Motor neuron (in vitro differentiated cells): ENCODE measurements at regions of chr2 and their contacts with region 1.

Region 1: DNA sequence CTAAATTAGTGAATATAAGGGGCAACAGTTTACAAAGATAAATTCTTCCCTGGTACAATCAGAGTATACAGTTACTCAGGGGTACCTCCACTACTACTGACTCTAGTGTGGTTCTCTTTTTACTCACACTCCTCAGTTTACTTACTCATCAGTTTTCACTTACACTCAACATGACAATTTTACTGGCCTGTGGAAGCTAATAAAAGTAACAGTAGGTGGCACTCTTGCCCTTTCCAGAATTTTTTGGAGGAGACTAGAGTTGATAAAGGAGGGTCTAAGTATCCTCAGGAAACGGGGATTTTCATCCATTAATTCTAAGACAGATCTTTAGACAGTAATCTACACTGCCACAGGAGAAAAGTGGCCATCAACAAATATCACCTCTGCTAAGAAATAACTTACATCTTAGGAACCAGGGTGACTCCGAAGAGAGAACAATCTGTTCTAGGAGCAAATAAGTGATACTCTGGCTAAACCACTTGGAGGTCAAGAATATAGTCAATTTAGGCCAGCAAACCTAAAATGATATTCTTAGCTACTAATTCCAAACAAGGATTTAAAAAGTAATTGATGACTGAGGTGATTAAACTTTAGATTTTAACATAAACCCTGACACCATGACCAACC is 61.3 kb downstream of the ATL2 start:
- ATAC-seq: peak in 4 of 8 experiments; percentile 59 to 83 (median 74)
- H3K4me3 ChIP-seq: no peak overlapping the region
- H3K27ac ChIP-seq: no peak overlapping the region
- H3K4me1 ChIP-seq: no peaks in the 10 kb centered on the region

Region 2: GRCh38 chr2:37039580-37039979 is 1276.2 kb before region 1 on chr2:
- in situ Hi-C with region 1: no loop called
- ATAC-seq: no peak
- H3K4me3 ChIP-seq: no peak overlapping the region
- H3K27ac ChIP-seq: no peak overlapping the region
- H3K4me1 ChIP-seq: no peaks in the 10 kb centered on the region

Region 3: DNA sequence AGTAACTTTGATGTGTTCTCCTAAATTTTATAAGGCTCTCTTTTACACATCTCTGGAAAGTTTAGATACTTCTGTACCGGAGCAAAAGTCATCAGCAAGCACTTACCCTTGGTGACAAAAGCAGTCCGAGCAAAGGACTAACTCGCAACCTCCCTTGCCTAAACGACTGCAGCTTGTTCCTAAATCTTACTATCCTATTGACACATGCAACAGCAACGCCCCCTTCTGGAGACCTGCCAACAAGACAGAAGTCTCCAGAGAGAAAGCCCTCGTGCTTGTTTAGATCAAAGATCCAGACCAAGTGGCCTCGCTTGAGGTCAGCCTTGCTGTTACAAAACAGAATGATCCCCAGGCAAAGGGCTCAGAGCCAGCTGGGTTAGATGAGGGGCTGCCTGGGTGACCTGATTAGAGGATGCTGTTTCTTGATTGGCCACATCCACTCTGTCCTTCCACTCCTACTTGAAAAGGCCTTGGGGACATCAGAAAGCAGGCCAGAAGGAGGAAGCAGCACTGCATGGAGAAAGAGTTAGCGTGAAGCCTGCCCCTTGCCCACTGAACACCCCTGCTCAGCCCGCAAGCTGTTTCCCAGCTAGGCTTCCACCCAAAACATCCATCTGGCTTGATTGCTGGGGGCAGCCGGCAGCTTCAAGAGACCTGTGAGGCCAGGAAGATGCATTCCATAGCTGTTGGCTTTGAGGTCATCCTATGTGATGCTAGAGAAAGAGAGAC is 192.7 kb after region 1 on chr2:
- in situ Hi-C with region 1: loop called in 4 of 9 experiments (anchors 10 to 25 kb)
- ATAC-seq: peak in 7 of 8 experiments; percentile 38 to 94 (median 72)
- H3K4me3 ChIP-seq: no peak overlapping the region
- H3K27ac ChIP-seq: no peak overlapping the region
- H3K4me1 ChIP-seq: no peaks in the 10 kb centered on the region

Region 4: DNA sequence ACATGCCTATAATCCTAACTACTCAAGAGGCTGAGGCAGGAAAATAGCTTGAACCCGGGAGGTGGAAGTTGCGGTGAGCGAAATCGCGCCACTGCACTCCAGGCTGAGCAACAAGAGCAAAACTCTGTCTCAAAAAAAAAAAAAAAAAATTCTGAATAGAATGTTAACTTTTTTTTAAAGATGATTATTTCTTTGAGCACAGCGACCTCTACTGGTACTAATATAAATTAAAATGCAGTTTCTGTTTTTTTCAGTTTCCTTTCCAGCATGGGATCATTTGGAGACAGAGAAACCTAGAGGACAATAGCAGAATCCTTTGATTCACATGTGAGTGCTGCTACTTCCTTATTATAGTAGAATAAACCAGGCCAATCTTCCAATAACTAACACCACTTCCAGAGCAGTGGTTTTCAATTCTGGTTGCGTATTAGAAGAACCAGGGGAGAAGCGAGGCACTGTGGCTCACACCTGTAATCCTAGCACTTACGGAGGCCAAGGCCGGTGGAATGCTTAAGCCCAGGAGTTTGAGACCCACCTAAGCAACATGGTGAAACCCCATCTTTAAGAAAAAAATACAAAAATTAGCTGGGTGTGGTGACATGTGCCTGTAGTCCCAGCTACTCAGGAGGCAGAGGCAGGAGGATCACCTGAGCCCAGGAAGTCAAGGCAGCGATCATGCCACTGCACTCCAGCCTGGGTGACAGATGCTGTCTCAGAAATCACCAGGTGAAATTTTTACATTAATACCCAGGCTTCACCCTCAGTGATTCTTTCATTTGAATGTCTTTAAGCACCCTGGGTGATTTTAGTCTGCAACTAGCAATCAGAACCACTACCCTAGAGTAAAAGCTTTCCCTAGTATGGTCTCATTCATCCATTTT is 425.3 kb after region 1 on chr2:
- in situ Hi-C with region 1: loop called in 2 of 9 experiments (anchors 25 kb)
- ATAC-seq: peak; percentile 6 to 34 (median 16)
- H3K4me3 ChIP-seq: no peak overlapping the region
- H3K27ac ChIP-seq: no peak overlapping the region
- H3K4me1 ChIP-seq: peaks cover 0 to 3% of the 10 kb centered on the region in 2 donors